ENCODE measurements at regions of chr22 and their contacts with region 1.

Region 1: DNA sequence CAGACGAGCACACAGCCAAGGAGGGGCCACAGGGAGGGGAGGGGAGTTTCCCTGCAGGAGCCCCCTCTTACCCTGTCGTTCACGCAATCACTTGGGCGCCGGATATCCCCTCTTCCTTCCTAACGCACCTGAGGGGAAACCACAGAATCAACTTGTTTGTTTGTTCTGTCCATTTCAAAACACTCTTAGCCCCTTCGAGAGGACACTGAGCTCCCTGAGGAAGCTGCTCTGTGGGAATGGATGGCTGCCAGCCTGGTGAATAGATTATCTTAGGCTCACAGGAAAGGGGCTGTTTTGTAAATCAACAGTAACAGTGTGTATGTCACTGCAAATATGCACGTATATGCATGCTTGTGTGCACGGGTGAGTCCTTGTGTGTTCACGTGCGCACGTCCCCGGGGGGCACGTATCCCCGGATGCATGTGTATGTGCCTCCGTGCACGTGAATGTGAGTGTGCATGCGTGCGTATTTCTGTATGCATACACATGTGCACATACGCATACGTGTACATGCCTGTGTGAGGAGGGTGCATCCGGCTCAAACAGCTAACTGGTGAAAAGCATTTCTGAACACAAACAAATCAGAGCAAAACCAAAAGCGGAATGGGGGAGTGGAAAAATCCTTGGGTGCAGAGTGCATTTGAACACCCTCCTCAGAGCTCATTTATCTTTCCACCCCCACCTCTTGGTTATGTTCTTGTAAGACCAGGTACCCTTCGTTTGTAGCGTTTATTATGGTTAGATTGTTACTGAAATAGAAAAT is 7.2 kb downstream of the ARSA start:
- DNase-seq: peak; percentile 96
- ATAC-seq: peak; percentile 71
- H3K4me3 Mint-ChIP-seq: peak overlapping the region; percentile 84
- H3K27ac Mint-ChIP-seq: peak overlapping the region; percentile 99
- H3K4me1 Mint-ChIP-seq: peaks cover 35% of the 10 kb centered on the region
- H3K27me3 Mint-ChIP-seq: no peaks in the 10 kb centered on the region
- CTCF ChIP-seq: peak; percentile 53

Region 2: GRCh38 chr22:50423042-50423815 is 197.5 kb before region 1 on chr22:
- CTCF ChIA-PET with region 1: no interaction called
- POLR2A ChIA-PET with region 1: no interaction called
- intact Hi-C with region 1: no loop called
- DNase-seq: no peak
- ATAC-seq: no peak
- H3K4me3 Mint-ChIP-seq: no peak overlapping the region
- H3K27ac Mint-ChIP-seq: no peak overlapping the region
- H3K4me1 Mint-ChIP-seq: no peaks in the 10 kb centered on the region
- H3K27me3 Mint-ChIP-seq: no peaks in the 10 kb centered on the region
- CTCF ChIP-seq: no peak

Region 3: GRCh38 chr22:50474668-50475492 is 145.9 kb before region 1 on chr22 and contains the start of gene SBF1:
- CTCF ChIA-PET with region 1: interaction called, 13 read pairs
- POLR2A ChIA-PET with region 1: interaction called, 7 read pairs
- intact Hi-C with region 1: no loop called
- DNase-seq: peak; percentile 91
- ATAC-seq: peak; percentile 76
- H3K4me3 Mint-ChIP-seq: peak within 1 kb of the TSS; percentile 99
- H3K27ac Mint-ChIP-seq: peak within 1 kb of the TSS; percentile 95
- H3K4me1 Mint-ChIP-seq: peaks cover 46% of the 10 kb centered on the region
- H3K27me3 Mint-ChIP-seq: peaks cover 1% of the 10 kb centered on the region
- CTCF ChIP-seq: no peak
- total RNA-seq, gene SBF1: 120 TPM

Region 4: GRCh38 chr22:50530877-50531545 is 89.8 kb before region 1 on chr22:
- CTCF ChIA-PET with region 1: interaction called, 67 read pairs
- POLR2A ChIA-PET with region 1: interaction called, 30 read pairs
- intact Hi-C with region 1: no loop called
- DNase-seq: peak; percentile 93
- ATAC-seq: peak; percentile 51
- H3K4me3 Mint-ChIP-seq: peak overlapping the region; percentile 89
- H3K27ac Mint-ChIP-seq: peak overlapping the region; percentile 98
- H3K4me1 Mint-ChIP-seq: peaks cover 36% of the 10 kb centered on the region
- H3K27me3 Mint-ChIP-seq: no peaks in the 10 kb centered on the region
- CTCF ChIP-seq: no peak

Region 5: GRCh38 chr22:50544078-50544745 is 76.6 kb before region 1 on chr22:
- CTCF ChIA-PET with region 1: interaction called, 22 read pairs
- POLR2A ChIA-PET with region 1: interaction called, 34 read pairs
- intact Hi-C with region 1: loop called (anchors 2 kb)
- DNase-seq: peak; percentile 93
- ATAC-seq: peak; percentile 59
- H3K4me3 Mint-ChIP-seq: peak overlapping the region; percentile 38
- H3K27ac Mint-ChIP-seq: peak overlapping the region; percentile 80
- H3K4me1 Mint-ChIP-seq: peaks cover 58% of the 10 kb centered on the region
- H3K27me3 Mint-ChIP-seq: no peaks in the 10 kb centered on the region
- CTCF ChIP-seq: peak; percentile 73

Region 6: DNA sequence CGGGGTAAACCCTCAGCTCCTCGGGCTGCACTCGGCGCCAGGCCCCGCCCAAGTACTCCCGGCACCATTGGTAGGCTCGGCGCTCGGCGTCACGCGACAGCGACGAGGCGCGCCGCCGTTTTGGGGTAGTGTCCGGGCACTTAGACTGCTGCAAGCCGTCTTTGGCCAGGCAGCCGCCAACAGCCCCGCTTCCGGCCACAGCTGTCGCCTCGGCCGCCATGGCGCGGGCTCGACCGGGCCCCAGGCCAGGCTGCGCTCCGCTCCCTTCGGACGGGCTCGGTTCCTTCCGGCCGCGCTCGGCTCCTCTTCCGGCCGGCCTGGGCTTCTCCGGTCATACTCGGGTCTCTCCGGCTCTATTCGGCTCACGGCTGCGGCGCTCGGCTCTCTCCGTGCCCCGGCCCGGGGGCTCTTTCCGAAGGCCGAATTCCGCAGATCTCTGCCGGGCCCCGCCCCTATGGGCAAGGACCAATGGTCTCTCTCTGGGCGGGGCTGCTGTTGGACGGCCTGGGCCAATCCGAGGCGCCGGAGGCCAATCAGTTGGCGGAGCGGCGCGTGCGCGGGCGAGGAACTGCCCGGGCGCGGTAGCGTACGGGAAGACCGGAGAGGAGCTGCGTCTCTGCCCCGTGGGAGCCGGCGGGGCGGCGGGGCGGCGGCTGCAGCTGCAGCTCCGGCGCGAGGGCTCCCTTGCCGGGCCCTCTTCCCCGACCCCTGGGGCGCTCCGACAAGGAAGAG is 38.0 kb before region 1 on chr22 and contains the start of gene CHKB:
- CTCF ChIA-PET with region 1: interaction called, 9 read pairs
- POLR2A ChIA-PET with region 1: interaction called, 14 read pairs
- intact Hi-C with region 1: no loop called
- DNase-seq: peak; percentile 99
- ATAC-seq: peak; percentile 97
- H3K4me3 Mint-ChIP-seq: peak within 1 kb of the TSS; percentile 92
- H3K27ac Mint-ChIP-seq: peak within 1 kb of the TSS; percentile 89
- H3K4me1 Mint-ChIP-seq: peaks cover 24% of the 10 kb centered on the region
- H3K27me3 Mint-ChIP-seq: no peaks in the 10 kb centered on the region
- CTCF ChIP-seq: no peak
- total RNA-seq, gene CHKB: 55.6 to 60.3 TPM

Region 7: DNA sequence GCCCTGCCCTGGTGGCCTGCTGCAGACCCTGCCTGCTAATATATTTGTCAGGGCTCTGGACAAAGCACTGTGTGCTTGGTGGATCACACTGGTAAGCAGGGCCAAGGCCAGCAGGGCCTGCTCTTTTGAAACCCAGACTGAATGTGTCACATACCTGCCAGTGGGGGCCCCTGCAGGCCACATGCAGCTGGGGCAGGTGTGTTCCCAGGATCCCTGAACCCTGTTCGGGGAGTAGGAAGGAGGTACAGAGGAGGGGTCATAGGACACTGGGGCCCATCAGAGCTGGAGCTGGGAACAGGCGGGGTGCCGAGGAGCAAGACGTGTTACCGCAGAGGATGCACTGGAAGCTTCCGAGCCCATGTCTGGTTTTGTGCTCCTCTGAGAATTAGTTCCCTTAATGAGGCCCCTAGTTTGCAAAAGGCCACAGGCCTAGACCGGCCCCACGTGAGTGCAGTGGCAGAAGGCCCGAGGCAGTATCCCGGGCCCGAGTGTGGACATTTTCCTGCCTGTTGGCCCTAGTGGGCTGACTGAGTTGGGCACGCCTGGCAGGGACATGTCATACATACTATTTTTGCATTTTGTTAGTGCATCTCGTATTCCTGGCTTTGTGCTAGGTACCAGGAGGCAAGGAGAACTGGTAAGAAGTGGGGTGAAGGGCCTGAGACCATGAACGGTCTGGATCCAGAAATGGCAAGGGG is 106.0 kb after region 1 on chr22:
- CTCF ChIA-PET with region 1: no interaction called
- POLR2A ChIA-PET with region 1: no interaction called
- intact Hi-C with region 1: no loop called
- DNase-seq: no peak
- ATAC-seq: no peak
- H3K4me3 Mint-ChIP-seq: no peak overlapping the region
- H3K27ac Mint-ChIP-seq: no peak overlapping the region
- H3K4me1 Mint-ChIP-seq: no peaks in the 10 kb centered on the region
- H3K27me3 Mint-ChIP-seq: no peaks in the 10 kb centered on the region
- CTCF ChIP-seq: no peak